Activated CD4-positive, alpha-beta memory T cell treated with anti-CD3 and anti-CD28 coated beads for 36 hours (primary cell): ENCODE measurements at regions of chr20 and their contacts with region 1.

Region 1: DNA sequence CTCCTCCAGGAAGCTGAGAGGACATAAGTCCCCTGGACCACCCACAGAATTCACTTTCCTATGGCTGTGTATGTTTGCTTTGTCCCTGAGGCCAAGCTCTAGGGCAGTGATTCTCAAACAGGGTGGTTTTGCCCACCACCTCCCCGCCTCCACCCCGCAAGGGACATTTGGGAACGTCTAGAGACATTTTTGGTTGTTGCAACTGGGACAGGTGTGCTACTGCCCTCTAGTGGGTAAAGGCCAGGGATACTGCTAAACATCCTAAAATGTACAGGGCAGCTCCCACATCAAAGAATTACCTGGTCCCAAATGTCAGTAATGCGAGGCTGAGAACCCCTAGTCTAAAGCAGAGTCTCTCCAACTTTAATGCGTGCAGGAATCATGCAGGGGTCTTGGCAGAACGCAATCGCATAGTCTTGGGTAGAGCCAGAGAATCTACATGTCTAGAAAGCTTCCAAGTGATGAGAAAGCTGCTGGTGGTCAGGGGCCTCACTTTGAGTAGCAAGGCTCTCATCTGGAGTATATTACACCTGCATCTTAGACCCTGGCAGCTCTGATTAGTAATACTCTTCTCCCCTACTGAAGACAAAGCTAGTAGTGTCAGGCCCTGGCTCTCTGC is 5.1 kb downstream of the KCNS1 start:
- DNase-seq: peak; percentile 69
- H3K4me3 Mint-ChIP-seq: no peak overlapping the region
- H3K27ac Mint-ChIP-seq: no peak overlapping the region
- H3K4me1 Mint-ChIP-seq: peaks cover 13% of the 10 kb centered on the region
- H3K27me3 Mint-ChIP-seq: peaks cover 30% of the 10 kb centered on the region

Region 2: DNA sequence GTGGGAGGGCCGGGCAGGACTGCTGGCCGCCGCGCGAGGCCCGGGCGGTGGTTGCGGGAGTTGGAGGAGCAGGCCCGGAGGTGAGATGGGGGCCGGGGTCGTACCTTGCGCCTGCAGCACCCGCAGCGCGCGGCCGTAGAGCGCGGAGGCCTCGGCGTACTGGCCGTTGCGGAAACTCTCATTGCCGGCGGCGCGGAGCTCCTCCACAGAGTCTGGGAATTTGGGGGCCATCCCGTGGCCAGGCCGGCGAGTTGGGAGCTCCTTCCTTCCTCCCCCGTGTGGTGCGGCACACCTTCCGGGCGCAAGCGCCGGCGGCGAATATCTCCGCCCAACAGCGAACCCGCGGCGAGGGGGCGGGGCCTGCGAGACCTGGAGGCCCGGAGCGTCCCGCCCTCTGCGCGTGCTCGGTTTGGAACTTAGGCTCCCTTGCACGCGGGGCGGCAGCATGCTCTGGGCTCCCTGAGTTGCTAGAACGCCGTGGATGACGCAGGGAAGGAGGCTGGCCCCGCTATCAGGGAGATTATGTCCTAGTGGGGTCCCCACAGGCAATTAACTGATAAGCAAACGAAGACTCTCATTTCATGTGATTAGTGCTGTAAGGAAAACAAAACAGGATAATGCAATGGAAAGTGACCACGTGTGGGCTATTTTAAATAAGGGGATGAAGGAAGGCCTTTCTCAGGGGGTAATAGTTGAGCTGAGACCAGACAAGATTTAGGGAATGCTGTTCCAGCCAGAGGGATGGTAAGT is 135.6 kb before region 1 on chr20 and contains the start of gene TOMM34:
- CTCF ChIA-PET with region 1: interaction called, 19 read pairs
- POLR2A ChIA-PET with region 1: no interaction called
- intact Hi-C with region 1: loop called (anchors 5 kb)
- DNase-seq: peak; percentile 96
- H3K4me3 Mint-ChIP-seq: peak within 1 kb of the TSS; percentile 95
- H3K27ac Mint-ChIP-seq: peak within 1 kb of the TSS; percentile 99
- H3K4me1 Mint-ChIP-seq: peaks cover 58% of the 10 kb centered on the region
- H3K27me3 Mint-ChIP-seq: no peaks in the 10 kb centered on the region
- total RNA-seq, gene TOMM34: 56.3 to 58.4 TPM

Region 3: DNA sequence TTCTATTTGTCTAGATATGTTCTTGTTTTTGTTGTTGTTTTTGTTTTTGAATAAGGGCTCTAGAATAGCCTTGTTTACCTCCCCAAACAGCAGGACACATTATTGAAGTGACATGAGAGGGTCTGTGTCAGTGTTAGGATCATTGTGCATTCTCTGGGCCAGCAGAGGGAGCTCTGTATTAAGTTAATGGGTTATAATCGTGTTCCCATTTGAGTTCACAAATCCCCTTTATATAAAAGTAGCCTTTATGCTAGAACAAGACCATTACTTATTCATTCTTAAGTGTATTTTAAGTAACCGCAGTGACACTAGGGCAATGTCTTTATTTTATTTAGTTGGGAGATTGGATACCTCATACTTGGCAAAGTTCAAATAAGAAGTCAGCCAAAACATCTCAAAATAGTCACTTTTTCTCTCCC is 84.7 kb before region 1 on chr20:
- CTCF ChIA-PET with region 1: interaction called, 100 read pairs
- POLR2A ChIA-PET with region 1: no interaction called
- intact Hi-C with region 1: loop called (anchors 1 kb)
- DNase-seq: peak; percentile 55
- H3K4me3 Mint-ChIP-seq: no peak overlapping the region
- H3K27ac Mint-ChIP-seq: no peak overlapping the region
- H3K4me1 Mint-ChIP-seq: peaks cover 62% of the 10 kb centered on the region
- H3K27me3 Mint-ChIP-seq: no peaks in the 10 kb centered on the region

Region 4: GRCh38 chr20:45036044-45036755 is 59.7 kb before region 1 on chr20:
- CTCF ChIA-PET with region 1: interaction called, 19 read pairs
- POLR2A ChIA-PET with region 1: interaction called, 3 read pairs
- intact Hi-C with region 1: no loop called
- DNase-seq: peak; percentile 83
- H3K4me3 Mint-ChIP-seq: no peak overlapping the region
- H3K27ac Mint-ChIP-seq: peak overlapping the region; percentile 92
- H3K4me1 Mint-ChIP-seq: peaks cover 78% of the 10 kb centered on the region
- H3K27me3 Mint-ChIP-seq: no peaks in the 10 kb centered on the region

Region 5: GRCh38 chr20:45052698-45053429 is 43.0 kb before region 1 on chr20:
- CTCF ChIA-PET with region 1: interaction called, 72 read pairs
- POLR2A ChIA-PET with region 1: no interaction called
- intact Hi-C with region 1: no loop called
- DNase-seq: peak; percentile 41
- H3K4me3 Mint-ChIP-seq: no peak overlapping the region
- H3K27ac Mint-ChIP-seq: peak overlapping the region; percentile 74
- H3K4me1 Mint-ChIP-seq: peaks cover 77% of the 10 kb centered on the region
- H3K27me3 Mint-ChIP-seq: no peaks in the 10 kb centered on the region

Region 6: GRCh38 chr20:45080867-45081624 is 14.8 kb before region 1 on chr20:
- CTCF ChIA-PET with region 1: interaction called, 24 read pairs
- POLR2A ChIA-PET with region 1: interaction called, 3 read pairs
- intact Hi-C with region 1: no loop called
- DNase-seq: no peak
- H3K4me3 Mint-ChIP-seq: no peak overlapping the region
- H3K27ac Mint-ChIP-seq: no peak overlapping the region
- H3K4me1 Mint-ChIP-seq: no peaks in the 10 kb centered on the region
- H3K27me3 Mint-ChIP-seq: no peaks in the 10 kb centered on the region

Region 7: GRCh38 chr20:45124365-45124764 is 28.5 kb after region 1 on chr20 and contains the start of gene WFDC12:
- CTCF ChIA-PET with region 1: no interaction called
- POLR2A ChIA-PET with region 1: no interaction called
- intact Hi-C with region 1: no loop called
- DNase-seq: no peak
- H3K4me3 Mint-ChIP-seq: no peak within 1 kb of the TSS
- H3K27ac Mint-ChIP-seq: no peak within 1 kb of the TSS
- H3K4me1 Mint-ChIP-seq: no peaks in the 10 kb centered on the region
- H3K27me3 Mint-ChIP-seq: peaks cover 24% of the 10 kb centered on the region
- total RNA-seq, gene WFDC12: not detected

Region 8: GRCh38 chr20:45229264-45230056 is 133.6 kb after region 1 on chr20:
- CTCF ChIA-PET with region 1: interaction called, 8 read pairs
- POLR2A ChIA-PET with region 1: no interaction called
- intact Hi-C with region 1: loop called (anchors 2 kb)
- DNase-seq: peak; percentile 75
- H3K4me3 Mint-ChIP-seq: no peak overlapping the region
- H3K27ac Mint-ChIP-seq: no peak overlapping the region
- H3K4me1 Mint-ChIP-seq: no peaks in the 10 kb centered on the region
- H3K27me3 Mint-ChIP-seq: peaks cover 18% of the 10 kb centered on the region